CD14-positive monocyte (primary cell): ENCODE measurements at regions of chr7 and their contacts with region 1.

Region 1: GRCh38 chr7:44082541-44083207 is 344 bp upstream of the POLM start:
- DNase-seq: peak; percentile 97 to 99 (median 99)
- H3K4me3 ChIP-seq: peak overlapping the region; percentile 57 to 83 (median 78)
- H3K4me3 Mint-ChIP-seq: peak overlapping the region; percentile 75 to 85
- H3K27ac ChIP-seq: peak overlapping the region; percentile 80 to 83
- H3K27ac Mint-ChIP-seq: peak overlapping the region; percentile 65 to 94 (median 84)
- H3K4me1 ChIP-seq: peaks cover 14 to 16% of the 10 kb centered on the region in 2 donors
- H3K4me1 Mint-ChIP-seq: peaks cover 25% of the 10 kb centered on the region
- H3K27me3 ChIP-seq: no peaks in the 10 kb centered on the region
- H3K27me3 Mint-ChIP-seq: peaks cover 0 to 6% (median 1%) of the 10 kb centered on the region in 3 donors
- CTCF ChIP-seq: no peak

Region 2: DNA sequence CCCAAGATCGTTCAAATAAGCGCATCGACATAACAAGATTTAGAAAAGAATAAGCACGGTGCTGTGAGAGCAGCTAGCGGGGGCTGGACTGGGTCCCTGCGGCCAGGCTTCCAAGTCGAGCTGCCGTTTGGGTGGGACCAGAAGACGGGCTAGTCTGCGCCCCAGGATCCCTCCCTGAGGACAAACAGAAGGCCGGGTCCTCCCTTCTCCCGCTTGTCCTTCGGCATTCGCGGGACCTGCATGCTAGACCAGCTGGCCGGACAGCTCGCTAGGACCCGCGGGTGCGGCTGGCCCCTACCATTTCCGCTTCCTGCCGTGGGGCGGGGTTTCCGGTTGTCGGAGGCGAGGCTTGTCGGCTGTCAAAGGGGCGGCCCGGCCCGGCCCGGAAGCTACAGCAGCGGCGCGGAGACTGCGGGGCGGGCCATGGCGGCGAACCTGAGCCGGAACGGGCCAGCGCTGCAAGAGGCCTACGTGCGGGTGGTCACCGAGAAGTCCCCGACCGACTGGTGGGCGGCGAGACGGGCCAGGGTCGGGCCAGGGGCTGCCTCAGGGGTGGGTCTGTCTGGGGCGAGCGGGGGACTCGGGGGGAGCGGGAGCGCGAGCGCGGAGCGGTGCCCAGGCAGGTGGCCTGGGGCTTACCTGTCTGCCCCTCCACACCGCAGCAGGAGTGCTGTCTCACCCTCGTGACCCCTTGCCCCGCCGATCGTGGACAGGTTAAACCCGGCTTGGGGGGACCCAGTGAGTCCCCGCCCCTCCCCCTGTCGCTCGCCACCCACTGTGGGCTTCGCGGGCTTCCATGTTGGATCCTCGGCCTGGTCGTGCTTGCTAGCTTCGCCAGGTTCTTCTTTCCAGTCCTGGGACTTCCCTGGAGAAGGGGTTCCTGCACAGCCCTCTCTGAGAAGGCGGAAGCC is 38.1 kb before region 1 on chr7 and contains the start of gene DBNL:
- intact Hi-C with region 1: loop called in 1 of 2 experiments (anchors 2 kb)
- DNase-seq: peak; percentile 90 to 92 (median 91)
- H3K4me3 ChIP-seq: peak within 1 kb of the TSS; percentile 58 to 80 (median 72)
- H3K4me3 Mint-ChIP-seq: peak within 1 kb of the TSS; percentile 84 to 90
- H3K27ac ChIP-seq: peak within 1 kb of the TSS; percentile 94 to 97
- H3K27ac Mint-ChIP-seq: peak within 1 kb of the TSS; percentile 99 to 100 (median 99)
- H3K4me1 ChIP-seq: peaks cover 53 to 67% of the 10 kb centered on the region in 2 donors
- H3K4me1 Mint-ChIP-seq: peaks cover 44% of the 10 kb centered on the region
- H3K27me3 ChIP-seq: no peaks in the 10 kb centered on the region
- H3K27me3 Mint-ChIP-seq: peaks cover 0 to 4% (median 0%) of the 10 kb centered on the region in 3 donors
- CTCF ChIP-seq: no peak
- polyA plus RNA-seq, gene DBNL: 228 to 321 (median 304) TPM

Region 3: DNA sequence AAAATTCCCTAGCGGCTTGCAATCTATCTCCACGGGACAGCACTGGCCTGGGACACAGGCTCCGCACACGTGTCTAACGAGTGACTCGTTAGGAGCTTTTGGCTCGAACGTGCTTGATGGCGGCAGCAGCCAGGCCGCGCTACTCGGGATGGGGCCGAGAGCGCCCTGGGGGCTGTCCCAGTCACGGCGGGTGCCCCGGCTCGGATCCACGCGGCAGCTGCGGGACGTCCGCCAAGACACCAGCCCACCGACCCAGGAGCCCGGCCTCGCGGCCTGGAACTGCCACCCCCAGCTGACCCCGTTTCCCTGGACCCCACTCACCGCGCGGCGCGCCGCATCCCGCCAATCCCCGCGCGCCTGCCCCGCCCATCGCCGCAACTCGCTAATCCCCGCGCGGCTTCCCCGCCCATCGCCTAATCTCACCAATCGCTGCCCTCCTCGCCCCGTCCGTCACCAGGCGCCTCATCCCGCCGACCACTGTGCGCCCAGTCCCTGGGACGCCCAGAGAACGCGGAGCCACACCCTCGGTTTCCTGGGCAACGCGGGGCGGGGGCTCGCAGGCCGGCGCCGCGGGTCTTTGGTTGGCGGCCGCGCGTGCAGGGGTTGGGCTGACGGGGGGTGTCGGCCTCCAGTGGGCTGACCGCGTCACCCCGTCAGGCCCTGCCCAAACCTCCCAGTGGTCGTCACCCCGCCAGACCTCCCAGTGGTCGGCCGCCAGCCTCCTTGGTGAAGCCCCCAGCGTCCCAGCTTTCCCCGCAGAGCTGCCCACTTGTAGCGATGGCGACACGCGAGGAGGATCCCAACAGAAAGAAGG is 40.7 kb after region 1 on chr7 and contains the start of gene POLD2:
- intact Hi-C with region 1: loop called (anchors 5 kb)
- DNase-seq: peak; percentile 91 to 94 (median 93)
- H3K4me3 ChIP-seq: peak within 1 kb of the TSS; percentile 70 to 90 (median 85)
- H3K4me3 Mint-ChIP-seq: peak within 1 kb of the TSS; percentile 73 to 94
- H3K27ac ChIP-seq: peak within 1 kb of the TSS; percentile 14 to 85
- H3K27ac Mint-ChIP-seq: peak within 1 kb of the TSS; percentile 70 to 91 (median 78)
- H3K4me1 ChIP-seq: peaks cover 14 to 16% of the 10 kb centered on the region in 2 donors
- H3K4me1 Mint-ChIP-seq: peaks cover 15% of the 10 kb centered on the region
- H3K27me3 ChIP-seq: no peaks in the 10 kb centered on the region
- H3K27me3 Mint-ChIP-seq: peaks cover 0 to 4% (median 0%) of the 10 kb centered on the region in 3 donors
- CTCF ChIP-seq: no peak
- polyA plus RNA-seq, gene POLD2: 24.1 to 27.1 (median 25.7) TPM

Region 4: DNA sequence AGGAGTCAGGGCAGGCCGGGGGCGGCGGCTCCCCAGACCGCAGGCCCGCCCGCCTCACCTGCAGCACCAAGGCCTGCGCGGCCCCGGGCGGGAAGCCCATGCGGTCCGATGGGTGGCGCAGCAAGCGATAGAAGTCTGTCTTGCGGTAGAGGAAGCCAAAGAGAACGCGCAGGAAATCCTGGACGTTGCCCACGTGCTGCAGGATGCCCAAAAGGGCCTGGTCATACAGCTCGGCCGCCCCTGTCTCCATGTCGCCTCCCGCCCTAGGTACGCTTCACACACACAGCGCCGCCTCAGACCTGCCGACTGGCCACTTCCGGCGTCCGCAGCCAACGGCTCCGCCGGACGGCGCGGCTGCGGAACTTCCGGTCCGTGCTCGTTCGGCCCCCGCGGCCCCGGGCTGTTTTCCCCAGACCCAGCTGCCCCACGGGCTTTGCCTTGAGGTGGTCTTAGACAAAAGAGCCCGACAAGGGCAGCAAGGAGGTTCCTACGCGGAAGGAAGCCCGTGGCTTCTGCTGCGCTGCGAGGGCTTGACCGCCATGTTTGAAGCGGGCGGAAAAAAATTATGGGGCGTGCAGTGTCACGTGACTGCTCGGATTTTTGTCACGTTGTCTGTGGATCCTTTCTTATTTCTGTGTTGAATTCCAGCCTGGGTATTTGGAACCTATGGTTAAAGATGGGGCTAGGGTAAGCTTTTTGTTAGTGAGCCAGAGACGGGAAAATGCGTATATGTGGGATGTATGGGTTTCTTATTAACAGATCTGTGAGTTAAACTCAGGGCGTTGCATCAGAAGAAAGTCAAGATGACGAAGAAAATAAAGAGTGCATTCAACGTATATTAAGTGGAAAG is 407.9 kb after region 1 on chr7 and contains the start of gene NUDCD3:
- intact Hi-C with region 1: loop called in 1 of 2 experiments (anchors 5 kb)
- DNase-seq: peak; percentile 77 to 78 (median 77)
- H3K4me3 ChIP-seq: peak within 1 kb of the TSS; percentile 60 to 80 (median 78)
- H3K4me3 Mint-ChIP-seq: peak within 1 kb of the TSS; percentile 74 to 94
- H3K27ac ChIP-seq: peak within 1 kb of the TSS; percentile 84 to 95
- H3K27ac Mint-ChIP-seq: peak within 1 kb of the TSS; percentile 86 to 98 (median 92)
- H3K4me1 ChIP-seq: peaks cover 13 to 21% of the 10 kb centered on the region in 2 donors
- H3K4me1 Mint-ChIP-seq: peaks cover 40% of the 10 kb centered on the region
- H3K27me3 ChIP-seq: no peaks in the 10 kb centered on the region
- H3K27me3 Mint-ChIP-seq: peaks cover 0 to 4% (median 2%) of the 10 kb centered on the region in 3 donors
- CTCF ChIP-seq: no peak
- polyA plus RNA-seq, gene NUDCD3: 13.6 to 26.5 (median 21.6) TPM